Activated CD4-positive, alpha-beta memory T cell treated with anti-CD3 and anti-CD28 coated beads for 36 hours (primary cell): ENCODE measurements at regions of chr3 and their contacts with region 1.

Region 1: DNA sequence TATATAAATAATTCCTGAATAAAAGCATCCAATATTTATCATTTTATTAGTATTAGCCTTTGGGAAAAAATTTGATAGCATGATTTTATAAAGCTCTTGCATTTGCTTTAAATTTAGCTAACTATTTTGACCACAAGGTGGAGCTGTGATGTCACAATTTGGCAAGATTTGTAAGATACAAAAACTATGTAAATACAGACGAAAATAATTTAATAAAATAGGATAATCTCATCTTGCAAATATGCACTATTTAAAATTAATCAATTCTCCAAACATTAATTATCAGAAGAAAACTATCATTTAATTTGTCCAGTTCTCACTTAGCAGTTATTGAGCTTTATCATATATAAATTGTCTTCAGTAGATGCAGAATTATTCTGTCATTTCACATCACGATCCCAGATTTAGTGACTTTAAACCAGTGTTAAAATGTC is 95.4 kb downstream of the PLOD2 start:
- DNase-seq: no peak
- H3K4me3 Mint-ChIP-seq: no peak overlapping the region
- H3K27ac Mint-ChIP-seq: no peak overlapping the region
- H3K4me1 Mint-ChIP-seq: no peaks in the 10 kb centered on the region
- H3K27me3 Mint-ChIP-seq: no peaks in the 10 kb centered on the region

Region 2: GRCh38 chr3:146047485-146047884 is 18.1 kb before region 1 on chr3:
- CTCF ChIA-PET with region 1: no interaction called
- POLR2A ChIA-PET with region 1: no interaction called
- intact Hi-C with region 1: no loop called
- DNase-seq: no peak
- H3K4me3 Mint-ChIP-seq: no peak overlapping the region
- H3K27ac Mint-ChIP-seq: no peak overlapping the region
- H3K4me1 Mint-ChIP-seq: no peaks in the 10 kb centered on the region
- H3K27me3 Mint-ChIP-seq: peaks cover 2% of the 10 kb centered on the region

Region 3: DNA sequence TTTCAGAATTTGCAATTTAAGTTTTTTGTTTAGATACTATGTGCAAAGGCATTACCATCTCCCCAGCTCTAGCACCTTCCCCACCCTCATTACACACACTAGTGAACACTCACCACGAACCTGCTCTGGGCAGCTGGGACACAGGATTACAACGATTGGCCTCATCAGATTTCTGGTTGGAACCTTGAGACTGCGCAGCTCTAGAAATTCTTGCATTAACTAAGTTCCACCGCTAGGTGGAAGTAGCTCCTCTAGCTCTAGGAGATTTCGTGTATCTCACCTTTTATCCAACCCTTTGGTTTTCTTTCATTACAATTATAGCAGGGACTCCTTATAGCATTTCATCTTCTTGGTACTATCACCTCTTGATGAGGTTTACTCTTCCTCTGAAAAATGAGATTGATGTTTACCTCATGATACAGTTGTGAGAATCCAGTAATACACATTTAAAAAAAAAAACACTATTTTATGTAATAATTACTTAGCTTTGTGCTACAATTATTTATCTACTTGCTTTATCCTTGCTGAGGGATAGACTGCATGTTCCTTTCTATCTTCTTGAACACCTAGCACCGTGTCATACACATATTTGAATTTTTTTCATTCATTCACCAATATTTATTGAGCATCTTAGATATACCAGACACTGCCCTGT is 124.1 kb after region 1 on chr3:
- CTCF ChIA-PET with region 1: interaction called, 22 read pairs
- POLR2A ChIA-PET with region 1: no interaction called
- intact Hi-C with region 1: loop called (anchors 2 kb)
- DNase-seq: no peak
- H3K4me3 Mint-ChIP-seq: no peak overlapping the region
- H3K27ac Mint-ChIP-seq: no peak overlapping the region
- H3K4me1 Mint-ChIP-seq: no peaks in the 10 kb centered on the region
- H3K27me3 Mint-ChIP-seq: peaks cover 3% of the 10 kb centered on the region

Region 4: GRCh38 chr3:146326670-146327543 is 261.3 kb after region 1 on chr3:
- CTCF ChIA-PET with region 1: interaction called, 13 read pairs
- POLR2A ChIA-PET with region 1: no interaction called
- intact Hi-C with region 1: no loop called
- DNase-seq: no peak
- H3K4me3 Mint-ChIP-seq: no peak overlapping the region
- H3K27ac Mint-ChIP-seq: no peak overlapping the region
- H3K4me1 Mint-ChIP-seq: no peaks in the 10 kb centered on the region
- H3K27me3 Mint-ChIP-seq: no peaks in the 10 kb centered on the region

Region 5: GRCh38 chr3:146577662-146578061 is 512.1 kb after region 1 on chr3:
- CTCF ChIA-PET with region 1: interaction called, 6 read pairs
- POLR2A ChIA-PET with region 1: no interaction called
- intact Hi-C with region 1: loop called (anchors 2 kb)
- DNase-seq: peak; percentile 20
- H3K4me3 Mint-ChIP-seq: no peak overlapping the region
- H3K27ac Mint-ChIP-seq: no peak overlapping the region
- H3K4me1 Mint-ChIP-seq: no peaks in the 10 kb centered on the region
- H3K27me3 Mint-ChIP-seq: no peaks in the 10 kb centered on the region